IMR-90 (cell line): ENCODE measurements at regions of chr1 and their contacts with region 1.

Region 1: GRCh38 chr1:185987611-185988321 is 253.6 kb downstream of the HMCN1 start:
- DNase-seq: no peak
- ATAC-seq: no peak
- H3K4me3 ChIP-seq: no peak overlapping the region
- H3K27ac ChIP-seq: no peak overlapping the region
- H3K4me1 ChIP-seq: peaks cover 3% of the 10 kb centered on the region
- H3K27me3 ChIP-seq: no peaks in the 10 kb centered on the region
- CTCF ChIP-seq: no peak
- POLR2A ChIP-seq: no peak
- RAD21 ChIP-seq: no peak

Region 2: GRCh38 chr1:185681034-185681633 is 306.6 kb before region 1 on chr1:
- CTCF ChIA-PET with region 1: no interaction called
- POLR2A ChIA-PET with region 1: no interaction called
- dilution Hi-C with region 1: no loop called
- in situ Hi-C with region 1: no loop called
- intact Hi-C with region 1: no loop called
- DNase-seq: peak; percentile 44
- ATAC-seq: peak; percentile 71
- H3K4me3 ChIP-seq: no peak overlapping the region
- H3K27ac ChIP-seq: no peak overlapping the region
- H3K4me1 ChIP-seq: no peaks in the 10 kb centered on the region
- H3K27me3 ChIP-seq: no peaks in the 10 kb centered on the region
- CTCF ChIP-seq: peak; percentile 67
- POLR2A ChIP-seq: no peak
- RAD21 ChIP-seq: peak; percentile 67

Region 3: DNA sequence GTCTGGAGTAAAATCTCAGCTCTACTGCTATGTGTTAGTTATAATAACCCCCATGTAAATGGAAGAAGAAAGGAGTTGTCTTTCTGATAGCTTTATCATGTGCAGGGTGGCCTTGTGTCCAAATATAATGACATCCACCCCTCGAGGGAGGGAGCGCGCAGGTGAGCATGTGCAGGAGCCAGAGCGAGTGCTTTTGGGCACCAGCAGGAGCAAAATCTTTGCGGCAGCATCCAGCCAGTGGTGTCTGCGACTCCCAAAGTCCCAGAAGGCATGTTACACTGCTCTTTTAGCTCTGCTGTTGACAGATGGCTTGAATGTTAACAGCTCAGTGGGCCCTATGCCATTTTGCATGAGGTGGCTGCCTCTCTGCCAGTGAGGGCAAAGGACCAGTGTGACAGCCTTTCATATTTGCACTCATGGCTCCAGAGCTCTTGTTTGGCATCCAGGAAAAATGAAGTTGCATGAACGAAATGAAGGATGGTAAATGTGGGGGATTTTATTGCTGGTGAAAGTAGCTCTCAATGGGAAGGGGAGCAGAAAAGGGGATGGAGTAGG is 106.9 kb before region 1 on chr1:
- CTCF ChIA-PET with region 1: no interaction called
- POLR2A ChIA-PET with region 1: no interaction called
- dilution Hi-C with region 1: no loop called
- in situ Hi-C with region 1: no loop called
- intact Hi-C with region 1: loop called (anchors 5 kb)
- DNase-seq: no peak
- ATAC-seq: no peak
- H3K4me3 ChIP-seq: no peak overlapping the region
- H3K27ac ChIP-seq: no peak overlapping the region
- H3K4me1 ChIP-seq: no peaks in the 10 kb centered on the region
- H3K27me3 ChIP-seq: no peaks in the 10 kb centered on the region
- CTCF ChIP-seq: no peak
- POLR2A ChIP-seq: no peak
- RAD21 ChIP-seq: no peak